Right ventricle myocardium superior (tissue), 1 donor: ENCODE measurements at regions of chr12 and their contacts with region 1.

Region 1: GRCh38 chr12:47032644-47033043 is 46.8 kb upstream of the PCED1B start:
- DNase-seq: no peak
- ATAC-seq: peak; percentile 87

Region 2: DNA sequence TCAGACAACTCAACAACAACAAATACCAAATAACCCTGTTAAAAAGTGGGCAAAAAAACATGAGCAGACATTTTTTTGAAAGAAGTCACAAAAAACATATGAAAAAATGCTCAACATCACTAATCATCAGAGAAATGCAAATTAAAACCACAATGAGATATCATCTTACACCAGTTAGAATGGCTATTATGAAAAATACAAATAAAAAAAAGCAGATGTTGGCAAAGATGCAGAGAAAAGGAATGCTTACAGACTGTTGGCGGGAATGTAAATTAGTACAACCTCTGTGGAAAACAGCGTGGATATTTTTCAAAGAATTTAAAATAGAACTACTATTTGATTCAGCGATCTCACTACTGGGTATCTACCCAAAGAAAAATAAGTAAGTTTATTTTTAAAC is 320.9 kb before region 1 on chr12:
- intact Hi-C with region 1: no loop called
- DNase-seq: no peak
- ATAC-seq: no peak

Region 3: DNA sequence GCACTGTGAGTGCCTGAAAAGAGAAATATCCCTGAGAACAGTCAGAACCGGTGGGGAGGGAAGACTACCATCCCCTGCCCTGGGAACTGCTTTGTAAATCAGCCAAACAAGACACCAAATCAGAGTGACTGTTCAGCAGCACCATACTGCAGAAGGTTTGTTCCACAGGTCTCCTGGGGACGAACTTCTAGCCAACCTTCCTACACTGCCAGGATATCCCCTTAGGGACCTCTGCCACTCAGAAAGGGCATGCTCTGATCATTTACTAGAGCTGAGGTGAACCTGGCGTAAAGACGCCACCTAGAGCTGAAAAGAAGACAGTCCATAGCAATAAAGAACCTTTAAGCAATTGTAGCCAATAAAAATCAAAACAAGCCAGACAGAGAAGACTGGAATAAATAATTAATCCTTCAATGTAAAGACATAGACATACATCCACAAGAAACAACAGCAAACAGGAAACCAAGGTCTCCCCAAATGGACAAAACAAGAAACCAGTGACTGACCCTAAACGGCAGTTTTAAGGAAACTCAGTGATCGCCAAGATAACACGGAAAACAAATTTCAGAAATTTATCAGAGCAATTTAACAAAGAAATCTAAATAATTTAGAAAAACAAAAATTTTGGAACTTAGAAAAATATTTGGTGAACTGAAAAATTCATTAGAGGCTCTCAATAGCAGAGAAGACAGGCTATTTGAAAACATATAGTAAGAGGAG is 275.2 kb after region 1 on chr12:
- intact Hi-C with region 1: loop called (anchors 5 kb)
- DNase-seq: no peak
- ATAC-seq: peak; percentile 82

Region 4: DNA sequence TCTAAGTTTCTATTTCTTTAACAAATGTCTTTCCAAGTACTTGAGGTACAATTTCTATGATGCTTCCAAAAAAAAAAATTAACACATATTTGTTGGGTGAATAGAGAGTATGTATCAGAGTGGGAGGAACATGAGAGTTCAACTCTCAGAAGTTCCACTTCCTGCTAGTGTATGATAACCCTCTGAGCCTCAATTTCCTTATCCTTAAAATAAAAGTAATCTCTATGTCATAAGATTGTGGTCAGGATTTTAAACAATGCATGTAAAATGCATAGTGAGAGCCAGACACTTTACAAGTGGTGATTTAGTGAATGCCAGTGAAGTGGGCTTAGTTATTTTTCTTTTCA is 317.4 kb after region 1 on chr12:
- intact Hi-C with region 1: no loop called
- DNase-seq: no peak
- ATAC-seq: no peak

Region 5: GRCh38 chr12:47397664-47398281 is 365.1 kb after region 1 on chr12:
- intact Hi-C with region 1: loop called (anchors 10 kb)
- DNase-seq: no peak
- ATAC-seq: peak; percentile 67

Region 6: GRCh38 chr12:47686645-47687240 is 654.1 kb after region 1 on chr12:
- intact Hi-C with region 1: loop called (anchors 10 kb)
- DNase-seq: no peak
- ATAC-seq: peak; percentile 67